Activated naive CD4-positive, alpha-beta T cell treated with anti-CD3 and anti-CD28 coated beads, Interleukin-2, amount 10 ng/mL, durations not matched to agents 7 days and 5 days (primary cell): ENCODE measurements at regions of chr1 and their contacts with region 1.

Region 1: GRCh38 chr1:223556414-223557129 is 108.9 kb downstream of the CAPN8 start:
- DNase-seq: peak; percentile 58
- H3K4me3 Mint-ChIP-seq: no peak overlapping the region
- H3K27ac Mint-ChIP-seq: no peak overlapping the region
- H3K4me1 Mint-ChIP-seq: no peaks in the 10 kb centered on the region
- H3K27me3 Mint-ChIP-seq: no peaks in the 10 kb centered on the region

Region 2: GRCh38 chr1:223611936-223612335 is 55.4 kb after region 1 on chr1:
- CTCF ChIA-PET with region 1: interaction called, 49 read pairs
- DNase-seq: no peak
- H3K4me3 Mint-ChIP-seq: no peak overlapping the region
- H3K27ac Mint-ChIP-seq: no peak overlapping the region
- H3K4me1 Mint-ChIP-seq: no peaks in the 10 kb centered on the region
- H3K27me3 Mint-ChIP-seq: no peaks in the 10 kb centered on the region

Region 3: DNA sequence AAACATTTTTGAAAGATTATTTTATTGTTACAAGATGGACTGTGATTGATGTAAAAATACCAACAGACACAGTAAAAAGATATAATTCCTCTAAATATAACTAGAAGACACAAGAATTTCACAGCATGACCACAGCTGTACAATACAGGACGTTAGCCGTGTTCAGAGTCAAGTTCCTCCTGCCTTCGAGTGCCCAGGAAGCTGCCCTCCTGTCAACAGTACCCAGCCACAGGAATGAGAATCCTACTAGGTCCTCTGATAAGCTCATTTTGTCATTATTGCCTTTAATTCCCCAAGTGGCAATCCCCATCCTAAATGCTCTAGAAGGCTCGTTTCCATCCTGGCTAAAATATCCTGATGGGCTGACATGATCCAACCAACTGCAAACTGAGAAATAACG is 139.4 kb after region 1 on chr1:
- CTCF ChIA-PET with region 1: interaction called, 13 read pairs
- DNase-seq: no peak
- H3K4me3 Mint-ChIP-seq: no peak overlapping the region
- H3K27ac Mint-ChIP-seq: no peak overlapping the region
- H3K4me1 Mint-ChIP-seq: peaks cover 10% of the 10 kb centered on the region
- H3K27me3 Mint-ChIP-seq: peaks cover 9% of the 10 kb centered on the region